ENCODE measurements at regions of chr2 and their contacts with region 1.

Region 1: DNA sequence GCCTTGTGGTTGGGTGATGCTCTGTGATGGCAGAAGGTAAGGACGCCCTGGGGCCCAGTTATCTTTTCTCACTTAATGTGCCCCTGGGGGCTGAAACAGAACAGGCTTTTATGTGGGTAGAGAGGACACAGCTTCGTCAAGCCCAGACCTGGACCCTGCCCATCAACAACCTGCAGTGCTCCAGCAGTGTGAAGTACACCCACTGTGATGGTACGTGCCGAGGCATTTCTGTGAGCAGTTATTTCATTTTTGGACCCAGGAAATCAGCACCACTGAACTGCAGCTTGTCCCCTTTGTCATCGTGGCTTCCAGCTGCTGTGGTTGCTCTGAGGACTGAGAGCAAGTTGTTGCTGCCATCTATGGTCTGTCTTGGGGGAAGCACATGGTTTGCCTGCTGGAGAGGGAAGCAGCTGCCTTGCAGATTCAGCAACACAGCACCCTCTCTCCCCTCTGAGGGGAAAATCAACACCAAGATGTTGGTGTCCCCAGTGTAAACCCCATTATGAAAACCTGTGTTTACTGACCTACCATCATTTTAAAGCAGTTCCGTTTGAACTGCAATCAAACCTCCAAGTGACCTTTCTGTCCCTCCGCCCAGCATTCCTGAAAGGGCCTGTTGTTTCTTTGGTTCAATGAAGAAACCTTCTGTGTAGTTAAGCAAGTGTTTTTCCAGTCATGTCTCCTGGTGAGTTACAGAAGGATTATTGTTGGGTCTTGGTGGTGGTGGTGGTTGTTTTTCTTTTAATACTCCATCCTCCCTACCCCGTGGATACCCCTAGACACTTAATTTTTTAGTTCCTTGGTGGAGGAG is 158.2 kb downstream of the MGAT5 start:
- DNase-seq: peak; percentile 100
- ATAC-seq: peak; percentile 94
- H3K4me3 ChIP-seq: peak overlapping the region; percentile 68 to 74 (median 69)
- H3K27ac ChIP-seq: peak overlapping the region; percentile 89
- H3K4me1 ChIP-seq: peaks cover 51% of the 10 kb centered on the region
- H3K27me3 ChIP-seq: no peaks in the 10 kb centered on the region
- CTCF ChIP-seq: peak; percentile 99
- EP300 ChIP-seq: peak; percentile 88 to 99
- POLR2A ChIP-seq: peak in 1 of 2 experiments; percentile 77; a peak in 2 of 4 replicates
- RAD21 ChIP-seq: peak; percentile 94

Region 2: GRCh38 chr2:133886735-133887660 is 525.0 kb before region 1 on chr2:
- CTCF ChIA-PET with region 1: no interaction called
- POLR2A ChIA-PET with region 1: interaction called, 3 read pairs
- in situ Hi-C with region 1: no loop called
- intact Hi-C with region 1: loop called (anchors 5 kb)
- DNase-seq: peak; percentile 70
- ATAC-seq: peak; percentile 93
- H3K4me3 ChIP-seq: no peak overlapping the region
- H3K27ac ChIP-seq: no peak overlapping the region
- H3K4me1 ChIP-seq: no peaks in the 10 kb centered on the region
- H3K27me3 ChIP-seq: peaks cover 2 to 43% of the 10 kb centered on the region in 2 experiments; a peak in 3 of 5 replicates
- CTCF ChIP-seq: peak; percentile 85
- EP300 ChIP-seq: no peak
- POLR2A ChIP-seq: no peak
- RAD21 ChIP-seq: peak; percentile 56; the same call in 1 of the 2 replicates

Region 3: GRCh38 chr2:134207564-134208209 is 204.3 kb before region 1 on chr2:
- CTCF ChIA-PET with region 1: no interaction called
- POLR2A ChIA-PET with region 1: no interaction called
- in situ Hi-C with region 1: no loop called
- intact Hi-C with region 1: loop called (anchors 5 kb)
- DNase-seq: peak; percentile 48
- ATAC-seq: peak; percentile 99
- H3K4me3 ChIP-seq: no peak overlapping the region
- H3K27ac ChIP-seq: no peak overlapping the region
- H3K4me1 ChIP-seq: peaks cover 17% of the 10 kb centered on the region
- H3K27me3 ChIP-seq: no peaks in the 10 kb centered on the region
- CTCF ChIP-seq: peak; percentile 81
- EP300 ChIP-seq: no peak
- POLR2A ChIP-seq: no peak
- RAD21 ChIP-seq: peak; percentile 81

Region 4: GRCh38 chr2:134245340-134245984 is 166.6 kb before region 1 on chr2:
- CTCF ChIA-PET with region 1: interaction called, 5 read pairs
- POLR2A ChIA-PET with region 1: interaction called, 6 read pairs
- in situ Hi-C with region 1: loop called (anchors 10 kb)
- intact Hi-C with region 1: loop called (anchors 2 kb)
- DNase-seq: peak; percentile 57
- ATAC-seq: peak; percentile 63
- H3K4me3 ChIP-seq: no peak overlapping the region
- H3K27ac ChIP-seq: no peak overlapping the region
- H3K4me1 ChIP-seq: peaks cover 53% of the 10 kb centered on the region
- H3K27me3 ChIP-seq: no peaks in the 10 kb centered on the region
- CTCF ChIP-seq: peak; percentile 83
- EP300 ChIP-seq: no peak
- POLR2A ChIP-seq: no peak
- RAD21 ChIP-seq: peak; percentile 69; the same call in 1 of the 2 replicates

Region 5: DNA sequence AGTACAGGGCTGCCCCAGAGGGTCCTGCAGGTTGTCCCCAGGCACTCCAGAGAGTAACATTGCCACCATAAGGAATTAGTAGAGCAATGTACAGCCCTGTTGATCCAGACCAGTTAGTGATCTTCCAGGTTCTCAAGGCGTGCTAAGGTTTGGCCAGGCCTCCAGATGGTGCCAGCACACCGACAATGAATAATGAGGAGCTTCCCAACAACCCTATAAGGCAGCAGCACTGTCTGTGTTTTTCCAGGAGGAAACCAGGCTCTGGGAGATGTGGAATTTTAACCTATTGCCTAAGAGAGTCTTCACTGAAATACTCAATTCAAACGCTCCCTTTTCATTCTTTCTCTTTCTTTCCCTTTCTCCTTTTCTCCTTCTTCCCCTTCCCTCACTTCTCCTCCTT is 36.1 kb before region 1 on chr2:
- CTCF ChIA-PET with region 1: interaction called, 9 read pairs
- POLR2A ChIA-PET with region 1: interaction called, 6 read pairs
- in situ Hi-C with region 1: no loop called
- intact Hi-C with region 1: loop called (anchors 1 kb)
- DNase-seq: peak; percentile 75
- ATAC-seq: peak; percentile 97
- H3K4me3 ChIP-seq: no peak overlapping the region
- H3K27ac ChIP-seq: no peak overlapping the region
- H3K4me1 ChIP-seq: peaks cover 17% of the 10 kb centered on the region
- H3K27me3 ChIP-seq: no peaks in the 10 kb centered on the region
- CTCF ChIP-seq: peak; percentile 84
- EP300 ChIP-seq: peak in 1 of 2 experiments; percentile 45; a peak in 1 of 4 replicates
- POLR2A ChIP-seq: no peak
- RAD21 ChIP-seq: peak; percentile 76

Region 6: GRCh38 chr2:134425724-134426496 is 13.9 kb after region 1 on chr2:
- CTCF ChIA-PET with region 1: no interaction called
- POLR2A ChIA-PET with region 1: interaction called, 124 read pairs
- in situ Hi-C with region 1: no loop called
- intact Hi-C with region 1: no loop called
- DNase-seq: no peak
- ATAC-seq: no peak
- H3K4me3 ChIP-seq: no peak overlapping the region
- H3K27ac ChIP-seq: no peak overlapping the region
- H3K4me1 ChIP-seq: peaks cover 25% of the 10 kb centered on the region
- H3K27me3 ChIP-seq: no peaks in the 10 kb centered on the region
- CTCF ChIP-seq: no peak
- EP300 ChIP-seq: no peak
- POLR2A ChIP-seq: no peak
- RAD21 ChIP-seq: no peak

Region 7: GRCh38 chr2:134453476-134453875 is 41.4 kb after region 1 on chr2:
- CTCF ChIA-PET with region 1: interaction called, 34 read pairs
- POLR2A ChIA-PET with region 1: interaction called, 26 read pairs
- in situ Hi-C with region 1: no loop called
- intact Hi-C with region 1: loop called (anchors 1 kb)
- DNase-seq: no peak
- ATAC-seq: no peak
- H3K4me3 ChIP-seq: no peak overlapping the region
- H3K27ac ChIP-seq: no peak overlapping the region
- H3K4me1 ChIP-seq: peaks cover 41% of the 10 kb centered on the region
- H3K27me3 ChIP-seq: no peaks in the 10 kb centered on the region
- CTCF ChIP-seq: no peak
- EP300 ChIP-seq: no peak
- POLR2A ChIP-seq: no peak
- RAD21 ChIP-seq: no peak